ENCODE measurements at regions of chr6 and their contacts with region 1.

Region 1: GRCh38 chr6:109705258-109705657 is 14.2 kb downstream of the FIG4 start:
- DNase-seq: peak; percentile 83 to 87 (median 87)
- H3K4me3 ChIP-seq: no peak overlapping the region
- H3K4me3 Mint-ChIP-seq: no peak overlapping the region
- H3K27ac ChIP-seq: no peak overlapping the region
- H3K27ac Mint-ChIP-seq: peak overlapping the region in 1 of 7 donors; percentile 5
- H3K4me1 ChIP-seq: peaks cover 46% of the 10 kb centered on the region in 2 donors
- H3K4me1 Mint-ChIP-seq: peaks cover 54% of the 10 kb centered on the region
- H3K27me3 ChIP-seq: no peaks in the 10 kb centered on the region
- H3K27me3 Mint-ChIP-seq: peaks cover 0 to 2% (median 0%) of the 10 kb centered on the region in 3 donors
- CTCF ChIP-seq: peak; percentile 98

Region 2: GRCh38 chr6:109236115-109237076 is 468.9 kb before region 1 on chr6:
- intact Hi-C with region 1: loop called in 1 of 2 experiments (anchors 10 kb)
- DNase-seq: peak; percentile 27 to 88 (median 58)
- H3K4me3 ChIP-seq: peak overlapping the region in 1 of 3 experiments; percentile 56
- H3K4me3 Mint-ChIP-seq: peak overlapping the region; percentile 62 to 79
- H3K27ac ChIP-seq: peak overlapping the region; percentile 92 to 96
- H3K27ac Mint-ChIP-seq: peak overlapping the region; percentile 96 to 99 (median 99)
- H3K4me1 ChIP-seq: peaks cover 59 to 66% of the 10 kb centered on the region in 2 donors
- H3K4me1 Mint-ChIP-seq: peaks cover 59% of the 10 kb centered on the region
- H3K27me3 ChIP-seq: no peaks in the 10 kb centered on the region
- H3K27me3 Mint-ChIP-seq: peaks cover 0 to 2% (median 0%) of the 10 kb centered on the region in 3 donors
- CTCF ChIP-seq: no peak

Region 3: GRCh38 chr6:109526905-109527628 is 178.2 kb before region 1 on chr6:
- intact Hi-C with region 1: loop called (anchors 5 kb)
- DNase-seq: peak; percentile 44 to 64 (median 57)
- H3K4me3 ChIP-seq: no peak overlapping the region
- H3K4me3 Mint-ChIP-seq: no peak overlapping the region
- H3K27ac ChIP-seq: no peak overlapping the region
- H3K27ac Mint-ChIP-seq: peak overlapping the region in 4 of 7 donors; percentile 55 to 81 (median 72)
- H3K4me1 ChIP-seq: no peaks in the 10 kb centered on the region
- H3K4me1 Mint-ChIP-seq: peaks cover 3% of the 10 kb centered on the region
- H3K27me3 ChIP-seq: no peaks in the 10 kb centered on the region
- H3K27me3 Mint-ChIP-seq: peaks cover 0 to 2% (median 0%) of the 10 kb centered on the region in 3 donors
- CTCF ChIP-seq: peak; percentile 73

Region 4: GRCh38 chr6:109653264-109653663 is 52.0 kb before region 1 on chr6:
- intact Hi-C with region 1: no loop called
- DNase-seq: no peak
- H3K4me3 ChIP-seq: no peak overlapping the region
- H3K4me3 Mint-ChIP-seq: no peak overlapping the region
- H3K27ac ChIP-seq: no peak overlapping the region
- H3K27ac Mint-ChIP-seq: no peak overlapping the region
- H3K4me1 ChIP-seq: no peaks in the 10 kb centered on the region
- H3K4me1 Mint-ChIP-seq: no peaks in the 10 kb centered on the region
- H3K27me3 ChIP-seq: no peaks in the 10 kb centered on the region
- H3K27me3 Mint-ChIP-seq: peaks cover 0 to 2% (median 0%) of the 10 kb centered on the region in 3 donors
- CTCF ChIP-seq: no peak

Region 5: GRCh38 chr6:109783250-109783986 is 78.2 kb after region 1 on chr6:
- intact Hi-C with region 1: loop called in 1 of 2 experiments (anchors 10 kb)
- DNase-seq: peak; percentile 16 to 55 (median 39)
- H3K4me3 ChIP-seq: no peak overlapping the region
- H3K4me3 Mint-ChIP-seq: no peak overlapping the region
- H3K27ac ChIP-seq: no peak overlapping the region
- H3K27ac Mint-ChIP-seq: no peak overlapping the region
- H3K4me1 ChIP-seq: peaks cover 0 to 6% of the 10 kb centered on the region in 2 donors
- H3K4me1 Mint-ChIP-seq: peaks cover 4% of the 10 kb centered on the region
- H3K27me3 ChIP-seq: no peaks in the 10 kb centered on the region
- H3K27me3 Mint-ChIP-seq: no peaks in the 10 kb centered on the region
- CTCF ChIP-seq: peak; percentile 65

Region 6: DNA sequence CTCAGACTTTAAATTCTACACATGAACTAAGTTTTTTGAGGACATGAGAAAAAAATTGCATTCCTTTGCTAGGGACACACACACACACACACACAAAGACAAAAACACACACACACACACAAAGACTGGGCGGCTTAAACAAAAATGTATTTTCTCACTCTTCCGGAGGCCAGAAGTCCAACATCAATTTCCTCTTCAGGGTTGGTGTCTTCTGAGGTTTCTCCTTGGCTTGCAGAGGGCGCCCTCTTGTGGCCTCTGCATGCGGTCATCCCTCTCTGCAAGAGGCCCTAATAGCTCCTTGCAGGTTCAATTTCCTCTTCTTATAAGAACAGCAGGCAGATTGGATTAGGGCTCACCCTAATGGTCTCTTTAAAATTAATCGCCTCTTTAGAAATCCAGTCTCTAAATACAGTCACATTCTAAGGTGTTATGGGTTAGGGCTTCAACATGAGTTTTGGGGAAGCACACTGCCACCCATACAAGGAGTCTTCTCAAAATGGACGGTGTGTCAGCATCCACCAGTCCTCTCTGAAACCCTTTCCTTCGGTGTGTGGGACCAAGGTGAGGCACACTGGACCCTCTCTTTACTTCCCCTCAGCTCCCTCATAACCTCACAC is 334.2 kb after region 1 on chr6:
- intact Hi-C with region 1: loop called (anchors 5 kb)
- DNase-seq: peak; percentile 83
- H3K4me3 ChIP-seq: peak overlapping the region; percentile 46 to 77 (median 70)
- H3K4me3 Mint-ChIP-seq: peak overlapping the region; percentile 93 to 96
- H3K27ac ChIP-seq: peak overlapping the region; percentile 14 to 52
- H3K27ac Mint-ChIP-seq: peak overlapping the region; percentile 63 to 88 (median 84)
- H3K4me1 ChIP-seq: peaks cover 14 to 21% of the 10 kb centered on the region in 2 donors
- H3K4me1 Mint-ChIP-seq: peaks cover 18% of the 10 kb centered on the region
- H3K27me3 ChIP-seq: no peaks in the 10 kb centered on the region
- H3K27me3 Mint-ChIP-seq: peaks cover 0 to 7% (median 6%) of the 10 kb centered on the region in 3 donors
- CTCF ChIP-seq: peak; percentile 80

Region 7: DNA sequence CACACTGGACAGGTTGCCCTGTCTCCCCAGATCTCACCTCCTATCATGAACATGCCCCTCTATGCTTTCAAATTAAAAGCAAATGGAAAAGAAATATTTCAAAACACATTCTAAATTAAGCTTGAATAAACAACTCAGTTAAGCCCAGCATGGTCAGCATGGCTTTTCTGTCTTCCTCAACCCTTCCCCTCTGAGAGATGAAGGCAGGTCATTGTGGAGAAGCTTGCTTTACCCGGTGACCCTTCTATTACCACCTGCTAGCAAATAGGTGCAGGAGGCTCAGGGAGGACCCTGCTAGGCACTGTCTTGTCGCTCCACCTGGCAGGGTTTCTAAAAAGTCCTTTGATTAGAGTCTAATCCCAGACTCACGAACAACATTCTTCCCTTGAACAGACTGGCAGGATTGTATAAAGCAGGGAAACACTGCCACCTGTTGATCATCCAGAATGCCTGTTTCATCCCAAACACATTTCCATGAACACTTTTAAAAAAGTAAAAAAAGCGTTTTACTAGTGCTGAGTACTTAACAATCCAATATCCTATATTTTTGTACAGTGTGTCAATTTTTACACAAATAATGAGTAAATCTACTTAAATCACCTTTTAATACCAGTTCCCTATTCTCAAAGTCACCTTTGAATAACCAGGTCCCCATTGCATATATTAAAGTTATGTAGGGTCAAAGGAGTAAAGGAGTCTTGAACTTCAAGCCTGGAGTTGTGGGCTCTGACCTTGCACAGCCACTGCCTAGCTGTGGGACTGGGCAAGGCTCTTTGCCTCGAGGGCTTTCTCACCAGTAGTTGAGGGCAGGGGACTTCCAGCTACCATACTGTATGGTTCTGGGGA is 348.4 kb after region 1 on chr6:
- intact Hi-C with region 1: loop called in 1 of 2 experiments (anchors 5 kb)
- DNase-seq: peak; percentile 12 to 51 (median 34)
- H3K4me3 ChIP-seq: no peak overlapping the region
- H3K4me3 Mint-ChIP-seq: peak overlapping the region in 1 of 2 donors; percentile 11
- H3K27ac ChIP-seq: no peak overlapping the region
- H3K27ac Mint-ChIP-seq: no peak overlapping the region
- H3K4me1 ChIP-seq: no peaks in the 10 kb centered on the region
- H3K4me1 Mint-ChIP-seq: peaks cover 9% of the 10 kb centered on the region
- H3K27me3 ChIP-seq: no peaks in the 10 kb centered on the region
- H3K27me3 Mint-ChIP-seq: peaks cover 0 to 4% (median 2%) of the 10 kb centered on the region in 3 donors
- CTCF ChIP-seq: peak; percentile 67

Region 8: GRCh38 chr6:110389689-110390382 is 684.6 kb after region 1 on chr6:
- intact Hi-C with region 1: loop called in 1 of 2 experiments (anchors 5 kb)
- DNase-seq: no peak
- H3K4me3 ChIP-seq: no peak overlapping the region
- H3K4me3 Mint-ChIP-seq: no peak overlapping the region
- H3K27ac ChIP-seq: no peak overlapping the region
- H3K27ac Mint-ChIP-seq: no peak overlapping the region
- H3K4me1 ChIP-seq: no peaks in the 10 kb centered on the region
- H3K4me1 Mint-ChIP-seq: peaks cover 2% of the 10 kb centered on the region
- H3K27me3 ChIP-seq: no peaks in the 10 kb centered on the region
- H3K27me3 Mint-ChIP-seq: peaks cover 0 to 2% (median 2%) of the 10 kb centered on the region in 3 donors
- CTCF ChIP-seq: no peak